Naive thymus-derived CD4-positive, alpha-beta T cell (primary cell): ENCODE measurements at regions of chr17 and their contacts with region 1.

Region 1: DNA sequence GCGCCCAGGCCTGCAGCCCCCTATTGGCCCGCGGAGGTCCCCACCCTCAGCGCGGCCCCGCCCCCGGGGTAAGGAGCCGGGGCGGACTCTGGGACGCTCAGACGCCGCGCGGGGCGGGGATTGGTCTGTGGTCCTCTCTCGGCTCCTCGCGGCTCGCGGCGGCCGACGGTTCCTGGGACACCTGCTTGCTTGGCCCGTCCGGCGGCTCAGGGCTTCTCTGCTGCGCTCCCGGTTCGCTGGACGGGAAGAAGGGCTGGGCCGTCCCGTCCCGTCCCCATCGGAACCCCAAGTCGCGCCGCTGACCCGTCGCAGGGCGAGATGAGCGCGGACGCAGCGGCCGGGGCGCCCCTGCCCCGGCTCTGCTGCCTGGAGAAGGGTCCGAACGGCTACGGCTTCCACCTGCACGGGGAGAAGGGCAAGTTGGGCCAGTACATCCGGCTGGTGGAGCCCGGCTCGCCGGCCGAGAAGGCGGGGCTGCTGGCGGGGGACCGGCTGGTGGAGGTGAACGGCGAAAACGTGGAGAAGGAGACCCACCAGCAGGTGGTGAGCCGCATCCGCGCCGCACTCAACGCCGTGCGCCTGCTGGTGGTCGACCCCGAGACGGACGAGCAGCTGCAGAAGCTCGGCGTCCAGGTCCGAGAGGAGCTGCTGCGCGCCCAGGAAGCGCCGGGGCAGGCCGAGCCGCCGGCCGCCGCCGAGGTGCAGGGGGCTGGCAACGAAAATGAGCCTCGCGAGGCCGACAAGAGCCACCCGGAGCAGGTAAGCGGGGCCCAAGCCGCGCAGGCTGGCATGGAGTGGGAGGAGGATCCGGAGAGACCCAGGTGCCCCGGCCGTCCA is at the start of gene NHERF1:
- DNase-seq: peak; percentile 45 to 98 (median 91)
- ATAC-seq: peak; percentile 95
- H3K4me3 ChIP-seq: peak within 1 kb of the TSS; percentile 95
- H3K4me3 Mint-ChIP-seq: peak within 1 kb of the TSS; percentile 96 to 100 (median 98)
- H3K27ac ChIP-seq: peak within 1 kb of the TSS; percentile 90
- H3K27ac Mint-ChIP-seq: peak within 1 kb of the TSS; percentile 80 to 97 (median 93)
- H3K4me1 ChIP-seq: peaks cover 54 to 59% of the 10 kb centered on the region in 2 donors
- H3K4me1 Mint-ChIP-seq: peaks cover 54 to 68% (median 62%) of the 10 kb centered on the region in 7 donors
- H3K27me3 ChIP-seq: no peaks in the 10 kb centered on the region
- H3K27me3 Mint-ChIP-seq: no peaks in the 10 kb centered on the region
- total RNA-seq, gene NHERF1: 93.1 to 279 (median 156) TPM

Region 2: DNA sequence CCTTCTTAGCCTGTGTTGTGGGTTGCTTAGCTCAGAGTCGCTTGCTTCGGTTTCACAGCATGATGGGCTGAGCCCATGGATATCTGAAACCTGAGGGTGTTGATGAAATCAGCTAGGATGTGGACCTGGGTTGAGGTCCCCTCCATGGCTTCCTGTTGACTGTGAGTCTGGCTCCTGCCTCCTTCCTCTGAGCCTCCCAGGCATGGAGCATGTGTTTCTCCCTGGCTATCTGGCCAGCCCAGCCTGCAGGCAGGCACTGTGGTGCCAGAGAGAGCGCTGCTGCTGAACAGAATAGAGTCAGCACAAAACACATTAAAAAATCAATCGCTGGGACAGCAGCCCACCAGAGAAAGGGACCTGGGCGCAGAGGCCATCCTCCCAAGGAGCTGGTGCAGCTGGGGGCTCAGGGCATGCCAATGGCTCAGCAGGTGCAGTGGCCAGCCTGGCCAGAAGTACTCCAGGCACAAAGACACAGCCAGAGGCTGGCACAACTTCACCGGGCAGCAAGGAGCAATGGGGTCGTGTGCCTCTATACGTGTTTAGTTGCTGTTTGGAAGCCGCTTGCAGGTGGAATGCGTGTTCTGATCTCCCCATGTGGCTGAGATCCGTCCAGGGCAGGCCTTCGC is 345.1 kb before region 1 on chr17:
- CTCF ChIA-PET with region 1: no interaction called
- POLR2A ChIA-PET with region 1: no interaction called
- intact Hi-C with region 1: no loop called
- DNase-seq: no peak
- ATAC-seq: no peak
- H3K4me3 ChIP-seq: no peak overlapping the region
- H3K4me3 Mint-ChIP-seq: no peak overlapping the region
- H3K27ac ChIP-seq: no peak overlapping the region
- H3K27ac Mint-ChIP-seq: no peak overlapping the region
- H3K4me1 ChIP-seq: no peaks in the 10 kb centered on the region
- H3K4me1 Mint-ChIP-seq: peaks cover 0 to 2% (median 0%) of the 10 kb centered on the region in 7 donors
- H3K27me3 ChIP-seq: no peaks in the 10 kb centered on the region
- H3K27me3 Mint-ChIP-seq: peaks cover 0 to 13% (median 4%) of the 10 kb centered on the region in 5 donors

Region 3: GRCh38 chr17:74659898-74660297 is 88.8 kb before region 1 on chr17:
- CTCF ChIA-PET with region 1: interaction called, 30 read pairs
- POLR2A ChIA-PET with region 1: interaction called, 5 read pairs
- intact Hi-C with region 1: no loop called
- DNase-seq: no peak
- ATAC-seq: no peak
- H3K4me3 ChIP-seq: no peak overlapping the region
- H3K4me3 Mint-ChIP-seq: no peak overlapping the region
- H3K27ac ChIP-seq: no peak overlapping the region
- H3K27ac Mint-ChIP-seq: peak overlapping the region in 1 of 9 donors; percentile 32
- H3K4me1 ChIP-seq: peaks cover 0 to 3% of the 10 kb centered on the region in 2 donors
- H3K4me1 Mint-ChIP-seq: peaks cover 4 to 9% (median 6%) of the 10 kb centered on the region in 7 donors
- H3K27me3 ChIP-seq: peaks cover 0 to 3% of the 10 kb centered on the region in 2 donors
- H3K27me3 Mint-ChIP-seq: peaks cover 29 to 78% (median 36%) of the 10 kb centered on the region in 5 donors

Region 4: DNA sequence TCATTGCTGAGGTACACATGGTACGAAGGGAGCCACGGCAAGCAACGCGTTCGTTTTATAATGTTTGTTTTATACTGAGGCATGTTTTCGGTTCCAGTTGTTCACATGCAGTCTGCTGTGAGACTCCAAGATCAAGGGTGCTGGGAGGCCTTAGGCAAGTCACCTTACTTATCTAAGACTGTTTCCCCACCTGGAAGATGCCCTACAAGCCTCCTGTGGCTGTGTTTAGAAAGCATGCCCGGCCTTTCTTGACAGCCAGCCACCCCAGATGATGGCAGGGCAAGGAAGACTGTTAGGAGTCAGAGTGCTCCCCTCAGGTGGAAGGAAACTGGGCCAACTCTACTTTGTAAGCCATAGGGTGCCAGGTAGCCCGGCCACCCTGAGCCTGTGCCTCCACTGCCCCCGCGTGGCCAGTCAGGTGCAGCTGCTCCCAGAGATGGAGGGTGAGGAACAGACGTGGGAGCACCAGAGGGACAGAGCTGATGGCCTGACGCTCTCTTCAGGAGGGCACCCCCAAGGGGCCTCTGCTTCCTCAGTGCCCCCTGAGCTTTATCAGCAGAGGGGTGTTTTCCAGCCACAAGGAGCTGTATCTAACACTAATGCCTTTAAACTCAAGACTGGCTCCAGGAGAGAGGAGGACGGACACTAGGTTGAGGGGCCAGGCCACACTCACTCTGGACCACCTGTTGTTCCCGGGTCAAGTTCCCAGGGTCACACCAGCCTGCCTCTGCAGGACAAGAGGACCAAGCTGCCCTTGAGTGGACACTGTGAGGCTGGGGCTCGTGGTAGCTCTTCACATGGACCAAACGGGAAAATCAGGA is 22.0 kb after region 1 on chr17:
- CTCF ChIA-PET with region 1: interaction called, 165 read pairs
- POLR2A ChIA-PET with region 1: interaction called, 372 read pairs
- intact Hi-C with region 1: loop called (anchors 1 kb)
- DNase-seq: peak; percentile 66 to 82 (median 78)
- ATAC-seq: peak; percentile 95
- H3K4me3 ChIP-seq: no peak overlapping the region
- H3K4me3 Mint-ChIP-seq: peak overlapping the region in 2 of 10 donors; percentile 16 to 21
- H3K27ac ChIP-seq: peak overlapping the region; percentile 4
- H3K27ac Mint-ChIP-seq: peak overlapping the region; percentile 42 to 92 (median 76)
- H3K4me1 ChIP-seq: peaks cover 9 to 17% of the 10 kb centered on the region in 2 donors
- H3K4me1 Mint-ChIP-seq: peaks cover 10 to 46% (median 38%) of the 10 kb centered on the region in 7 donors
- H3K27me3 ChIP-seq: no peaks in the 10 kb centered on the region
- H3K27me3 Mint-ChIP-seq: no peaks in the 10 kb centered on the region

Region 5: DNA sequence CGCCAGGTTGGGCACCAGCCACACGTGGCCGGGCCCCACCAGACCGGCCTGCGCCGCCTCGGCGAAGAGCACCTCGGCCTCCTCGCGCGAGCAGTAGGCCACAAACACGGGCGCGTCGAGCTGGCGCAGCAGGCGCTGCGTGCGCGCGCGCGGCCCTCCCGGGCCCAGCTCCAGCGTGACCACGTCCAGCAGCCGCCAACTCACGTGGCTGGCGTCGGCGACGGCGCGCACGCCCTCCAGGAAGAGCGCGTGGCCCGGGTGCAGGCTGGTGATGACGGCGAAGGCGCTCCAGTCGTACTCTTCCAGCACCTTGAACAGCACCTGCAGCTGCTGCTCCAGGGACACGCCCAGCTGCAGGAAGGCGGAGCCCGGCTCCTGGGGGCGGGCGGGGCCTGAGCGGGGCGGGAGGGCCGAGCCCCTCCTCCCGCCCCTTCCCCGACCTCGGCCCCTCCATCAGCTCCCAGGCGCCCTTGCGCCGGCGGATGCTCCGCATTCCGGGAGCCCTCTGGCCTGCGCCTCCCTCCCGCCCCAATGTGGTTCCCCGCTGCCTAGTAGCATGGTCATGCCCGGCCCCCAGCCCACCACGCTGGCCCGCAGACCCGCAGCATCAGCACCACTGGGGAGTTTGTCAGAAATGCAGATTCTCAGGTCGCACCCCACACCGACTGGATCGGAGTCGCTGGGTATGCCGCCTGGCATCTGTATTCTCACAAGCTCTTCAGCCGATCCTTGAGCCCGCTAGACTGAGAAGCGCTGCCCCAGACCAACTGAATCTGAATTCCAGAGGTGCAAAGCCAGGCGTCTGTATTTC is 103.7 kb after region 1 on chr17:
- CTCF ChIA-PET with region 1: no interaction called
- POLR2A ChIA-PET with region 1: no interaction called
- intact Hi-C with region 1: loop called in 1 of 2 experiments (anchors 1 kb)
- DNase-seq: peak in 8 of 9 donors; percentile 52 to 80 (median 73)
- ATAC-seq: peak; percentile 88
- H3K4me3 ChIP-seq: peak overlapping the region; percentile 45
- H3K4me3 Mint-ChIP-seq: peak overlapping the region; percentile 72 to 90 (median 78)
- H3K27ac ChIP-seq: no peak overlapping the region
- H3K27ac Mint-ChIP-seq: peak overlapping the region in 4 of 9 donors; percentile 25 to 64 (median 46)
- H3K4me1 ChIP-seq: peaks cover 0 to 10% of the 10 kb centered on the region in 2 donors
- H3K4me1 Mint-ChIP-seq: peaks cover 5 to 13% (median 11%) of the 10 kb centered on the region in 7 donors
- H3K27me3 ChIP-seq: no peaks in the 10 kb centered on the region
- H3K27me3 Mint-ChIP-seq: peaks cover 26 to 60% (median 41%) of the 10 kb centered on the region in 5 donors

Region 6: GRCh38 chr17:74873038-74873873 is 124.5 kb after region 1 on chr17:
- CTCF ChIA-PET with region 1: interaction called, 3 read pairs
- POLR2A ChIA-PET with region 1: interaction called, 6 read pairs
- intact Hi-C with region 1: loop called (anchors 1 kb)
- DNase-seq: peak; percentile 91 to 100 (median 98)
- ATAC-seq: peak; percentile 97
- H3K4me3 ChIP-seq: peak overlapping the region; percentile 87
- H3K4me3 Mint-ChIP-seq: peak overlapping the region; percentile 74 to 96 (median 88)
- H3K27ac ChIP-seq: peak overlapping the region; percentile 91
- H3K27ac Mint-ChIP-seq: peak overlapping the region; percentile 94 to 99 (median 97)
- H3K4me1 ChIP-seq: peaks cover 11 to 14% of the 10 kb centered on the region in 2 donors
- H3K4me1 Mint-ChIP-seq: peaks cover 18 to 41% (median 22%) of the 10 kb centered on the region in 7 donors
- H3K27me3 ChIP-seq: no peaks in the 10 kb centered on the region
- H3K27me3 Mint-ChIP-seq: peaks cover 0 to 3% (median 0%) of the 10 kb centered on the region in 5 donors

Region 7: DNA sequence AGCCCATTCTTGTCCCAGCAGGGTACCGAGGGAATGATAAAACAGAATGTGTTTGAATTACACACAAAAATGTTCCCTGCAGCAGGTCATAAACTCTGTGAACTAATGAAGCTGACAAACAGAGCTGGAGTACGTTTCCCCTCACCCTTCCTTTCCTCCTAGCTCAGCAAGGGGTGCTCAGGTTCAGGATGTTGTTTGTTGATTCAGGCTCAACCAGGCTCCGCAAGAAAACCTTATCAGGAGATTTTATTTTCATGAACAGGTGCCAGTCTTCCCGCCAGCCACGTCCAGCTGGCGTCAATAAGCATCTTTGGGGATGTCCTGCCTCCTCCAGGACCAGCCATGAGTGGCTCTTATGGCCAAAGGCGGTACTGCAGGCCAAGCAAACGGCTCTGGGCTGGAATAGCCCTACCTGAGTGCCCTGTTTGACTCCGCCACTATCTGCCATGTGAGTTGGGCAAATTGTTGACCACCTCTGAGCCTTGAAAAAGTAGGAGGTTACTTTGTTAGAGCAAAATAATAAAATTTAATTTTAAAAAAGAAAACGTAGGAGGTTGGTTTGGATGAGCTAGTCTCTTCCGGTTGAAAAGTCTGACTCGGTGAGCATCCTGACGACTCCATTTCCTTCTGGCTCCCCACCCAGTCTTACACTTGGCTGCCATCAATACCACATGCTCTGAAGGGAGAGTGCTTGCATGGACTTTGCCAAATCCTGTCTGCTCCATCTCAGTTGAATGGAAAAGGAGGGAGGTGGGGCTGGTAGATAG is 357.1 kb after region 1 on chr17:
- CTCF ChIA-PET with region 1: no interaction called
- POLR2A ChIA-PET with region 1: no interaction called
- intact Hi-C with region 1: no loop called
- DNase-seq: no peak
- ATAC-seq: no peak
- H3K4me3 ChIP-seq: no peak overlapping the region
- H3K4me3 Mint-ChIP-seq: no peak overlapping the region
- H3K27ac ChIP-seq: no peak overlapping the region
- H3K27ac Mint-ChIP-seq: no peak overlapping the region
- H3K4me1 ChIP-seq: peaks cover 7 to 10% of the 10 kb centered on the region in 2 donors
- H3K4me1 Mint-ChIP-seq: peaks cover 6 to 15% (median 13%) of the 10 kb centered on the region in 7 donors
- H3K27me3 ChIP-seq: no peaks in the 10 kb centered on the region
- H3K27me3 Mint-ChIP-seq: no peaks in the 10 kb centered on the region